ENCODE measurements at regions of chr3 and their contacts with region 1.

Region 1: DNA sequence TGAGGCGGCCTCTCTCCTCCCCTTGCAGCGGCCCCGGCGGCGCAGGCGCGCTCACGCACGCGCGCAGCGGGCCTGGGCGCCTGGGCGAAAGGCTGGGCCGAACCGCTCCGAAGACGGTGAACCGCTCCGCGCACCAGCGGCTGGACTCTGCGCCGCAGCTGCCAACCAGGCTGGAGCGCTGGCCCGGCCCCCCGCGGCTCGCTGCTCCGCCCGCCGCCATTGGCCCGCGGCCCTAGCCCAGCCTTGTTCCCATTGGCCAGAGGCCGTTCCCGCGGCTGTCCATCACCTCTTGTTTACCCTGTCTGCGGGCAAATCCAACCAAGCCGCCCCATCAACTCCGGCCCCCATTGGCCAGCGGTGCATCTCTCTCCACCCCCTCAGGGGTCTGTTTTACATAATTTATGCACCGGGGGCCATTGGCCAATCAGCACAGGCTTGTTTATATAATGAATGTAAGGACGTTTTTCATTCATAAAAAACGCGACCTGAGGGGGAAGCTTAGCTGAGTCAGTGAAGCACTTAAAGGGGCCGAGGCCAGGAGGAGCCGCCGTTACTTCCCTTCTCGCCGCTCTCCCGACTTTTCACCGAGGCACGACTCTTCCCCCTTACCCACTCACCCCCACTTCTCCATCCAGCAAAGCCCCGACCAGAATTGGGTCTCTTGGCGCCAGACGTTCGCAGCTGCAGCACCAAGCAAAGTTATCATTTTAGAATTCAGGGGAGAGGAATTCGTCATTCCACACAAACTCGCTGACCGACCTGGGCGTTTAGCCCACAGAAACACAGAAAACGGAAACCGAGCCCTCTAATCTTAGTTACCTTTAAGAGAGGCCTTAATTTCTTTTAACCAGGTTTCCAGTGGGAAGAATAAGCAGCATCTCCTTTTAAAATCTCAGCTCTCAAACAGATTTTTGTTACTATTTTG is at the start of gene ETV5:
- DNase-seq: peak; percentile 100
- H3K4me3 ChIP-seq: peak within 1 kb of the TSS; percentile 67 to 95 (median 87)
- H3K27ac ChIP-seq: peak within 1 kb of the TSS; percentile 88
- H3K4me1 ChIP-seq: peaks cover 18% of the 10 kb centered on the region
- H3K27me3 ChIP-seq: peaks cover 11 to 13% of the 10 kb centered on the region in 2 experiments
- CTCF ChIP-seq: no peak
- POLR2A ChIP-seq: peak; percentile 77
- total RNA-seq, gene ETV5: 40.9 and 43.4 TPM in 2 replicates

Region 2: DNA sequence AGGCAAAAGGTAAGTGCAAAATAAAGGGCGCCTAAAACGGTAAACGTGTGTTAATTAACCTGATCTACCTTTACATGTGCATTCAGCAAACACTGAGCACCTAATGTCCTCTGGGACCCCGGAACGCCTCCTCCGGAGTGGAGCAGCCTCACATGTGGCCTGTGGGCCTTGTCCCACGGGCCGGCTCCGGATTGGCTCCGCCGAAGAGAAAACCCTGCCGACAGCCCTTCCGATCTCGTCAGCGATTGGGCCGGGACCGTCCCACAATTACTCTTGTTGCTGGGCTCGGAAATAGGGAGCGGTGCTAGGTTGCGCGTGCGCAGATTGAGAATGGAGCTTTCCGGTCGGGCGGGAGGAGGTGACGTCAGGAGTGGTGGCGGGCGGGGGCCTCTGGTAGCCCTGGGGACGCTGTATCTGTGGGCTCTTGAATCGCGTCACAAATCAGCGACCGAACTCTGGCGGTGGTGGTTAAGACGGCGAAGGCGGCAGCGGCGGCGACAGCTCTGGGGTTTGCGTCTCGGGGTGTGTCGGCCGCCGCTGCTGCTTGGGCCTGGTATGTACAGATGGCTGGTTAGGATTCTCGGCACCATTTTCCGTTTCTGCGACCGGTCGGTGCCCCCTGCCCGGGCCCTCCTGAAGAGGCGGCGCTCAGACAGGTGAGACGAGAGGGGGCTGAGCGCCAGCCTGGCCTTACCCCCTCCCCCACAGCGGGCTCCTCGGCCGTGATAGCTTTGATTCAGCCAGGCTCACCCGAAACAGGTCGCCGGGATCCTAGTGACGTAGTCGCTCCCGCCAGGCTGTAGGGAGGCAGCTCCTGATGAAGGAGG is 523.1 kb before region 1 on chr3 and contains the start of gene SENP2:
- CTCF ChIA-PET with region 1: no interaction called
- POLR2A ChIA-PET with region 1: no interaction called
- dilution Hi-C with region 1: no loop called
- intact Hi-C with region 1: loop called (anchors 5 kb)
- DNase-seq: peak; percentile 100
- H3K4me3 ChIP-seq: peak within 1 kb of the TSS; percentile 36 to 93 (median 63)
- H3K27ac ChIP-seq: peak within 1 kb of the TSS; percentile 72
- H3K4me1 ChIP-seq: peaks cover 7% of the 10 kb centered on the region
- H3K27me3 ChIP-seq: peaks cover 0 to under 1% of the 10 kb centered on the region in 2 experiments
- CTCF ChIP-seq: no peak
- POLR2A ChIP-seq: peak; percentile 90
- total RNA-seq, gene SENP2: 38.9 and 40.4 TPM in 2 replicates

Region 3: GRCh38 chr3:185937689-185938463 is 171.3 kb before region 1 on chr3 and contains the start of gene TRA2B:
- CTCF ChIA-PET with region 1: interaction called, 7 read pairs
- POLR2A ChIA-PET with region 1: interaction called, 4 read pairs
- dilution Hi-C with region 1: no loop called
- intact Hi-C with region 1: loop called (anchors 1 kb)
- DNase-seq: peak; percentile 99
- H3K4me3 ChIP-seq: peak within 1 kb of the TSS; percentile 41 to 98 (median 97)
- H3K27ac ChIP-seq: peak within 1 kb of the TSS; percentile 76
- H3K4me1 ChIP-seq: peaks cover 26% of the 10 kb centered on the region
- H3K27me3 ChIP-seq: peaks cover 0 to 3% of the 10 kb centered on the region in 2 experiments
- CTCF ChIP-seq: peak in 1 of 2 donors; percentile 38
- POLR2A ChIP-seq: peak; percentile 99
- total RNA-seq, gene TRA2B: 199 and 214 TPM in 2 replicates

Region 4: GRCh38 chr3:186044973-186045372 is 64.2 kb before region 1 on chr3:
- CTCF ChIA-PET with region 1: interaction called, 5 read pairs
- POLR2A ChIA-PET with region 1: no interaction called
- dilution Hi-C with region 1: no loop called
- intact Hi-C with region 1: loop called (anchors 2 kb)
- DNase-seq: peak; percentile 99
- H3K4me3 ChIP-seq: no peak overlapping the region
- H3K27ac ChIP-seq: peak overlapping the region; percentile 28
- H3K4me1 ChIP-seq: peaks cover 10% of the 10 kb centered on the region
- H3K27me3 ChIP-seq: peaks cover 0 to 4% of the 10 kb centered on the region in 2 experiments
- CTCF ChIP-seq: no peak
- POLR2A ChIP-seq: no peak

Region 5: GRCh38 chr3:186067360-186068242 is 41.6 kb before region 1 on chr3:
- CTCF ChIA-PET with region 1: no interaction called
- POLR2A ChIA-PET with region 1: no interaction called
- dilution Hi-C with region 1: no loop called
- intact Hi-C with region 1: no loop called
- DNase-seq: no peak
- H3K4me3 ChIP-seq: no peak overlapping the region
- H3K27ac ChIP-seq: no peak overlapping the region
- H3K4me1 ChIP-seq: no peaks in the 10 kb centered on the region
- H3K27me3 ChIP-seq: no peaks in the 10 kb centered on the region
- CTCF ChIP-seq: no peak
- POLR2A ChIP-seq: no peak

Region 6: DNA sequence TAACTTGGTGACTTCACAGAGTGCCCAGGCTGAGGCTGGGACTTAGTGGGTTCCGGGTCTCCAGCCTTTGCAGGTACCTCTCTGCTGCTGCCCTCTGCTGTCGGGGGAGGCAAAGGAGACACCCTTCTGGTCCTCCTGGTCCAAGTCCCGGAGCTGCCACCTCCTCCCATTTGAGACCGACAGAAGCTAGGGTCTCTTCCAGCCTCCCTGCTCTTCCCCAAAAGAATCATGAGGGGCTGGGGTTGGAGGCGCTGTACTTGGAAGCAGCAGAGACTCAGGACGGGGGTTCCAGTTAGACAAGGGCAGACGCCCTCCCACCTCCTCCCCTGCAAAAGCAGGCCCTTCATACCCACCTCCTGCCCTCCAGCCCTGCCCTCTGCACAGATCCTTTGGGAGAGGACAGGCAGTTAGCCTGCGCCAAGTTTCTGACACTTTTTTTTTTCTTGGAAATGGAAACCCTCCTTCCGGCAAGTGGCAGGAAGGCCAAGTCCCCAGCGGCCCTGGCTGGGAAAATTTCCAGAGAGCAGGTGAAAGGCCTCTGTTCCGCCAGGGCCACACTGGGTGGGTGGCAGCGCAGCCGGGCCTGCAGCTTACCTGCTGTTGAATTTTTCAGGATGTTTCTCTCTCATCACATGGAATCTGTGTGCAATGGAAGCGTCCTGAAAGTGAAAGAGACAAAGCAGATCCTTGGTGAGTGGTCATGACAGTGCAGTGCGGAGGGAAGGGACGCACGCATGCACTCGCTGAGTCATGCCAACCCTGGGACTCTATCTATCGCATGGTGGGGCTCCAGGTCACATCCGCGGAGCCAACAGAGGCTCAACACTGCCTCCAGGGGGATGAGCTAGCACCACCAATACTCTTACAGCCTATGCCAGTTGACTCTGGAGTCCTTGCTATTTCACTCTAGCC is 133.0 kb after region 1 on chr3:
- CTCF ChIA-PET with region 1: no interaction called
- POLR2A ChIA-PET with region 1: no interaction called
- dilution Hi-C with region 1: no loop called
- intact Hi-C with region 1: loop called (anchors 5 kb)
- DNase-seq: peak; percentile 33
- H3K4me3 ChIP-seq: no peak overlapping the region
- H3K27ac ChIP-seq: no peak overlapping the region
- H3K4me1 ChIP-seq: no peaks in the 10 kb centered on the region
- H3K27me3 ChIP-seq: no peaks in the 10 kb centered on the region
- CTCF ChIP-seq: peak; percentile 24 to 55
- POLR2A ChIP-seq: no peak

Region 7: DNA sequence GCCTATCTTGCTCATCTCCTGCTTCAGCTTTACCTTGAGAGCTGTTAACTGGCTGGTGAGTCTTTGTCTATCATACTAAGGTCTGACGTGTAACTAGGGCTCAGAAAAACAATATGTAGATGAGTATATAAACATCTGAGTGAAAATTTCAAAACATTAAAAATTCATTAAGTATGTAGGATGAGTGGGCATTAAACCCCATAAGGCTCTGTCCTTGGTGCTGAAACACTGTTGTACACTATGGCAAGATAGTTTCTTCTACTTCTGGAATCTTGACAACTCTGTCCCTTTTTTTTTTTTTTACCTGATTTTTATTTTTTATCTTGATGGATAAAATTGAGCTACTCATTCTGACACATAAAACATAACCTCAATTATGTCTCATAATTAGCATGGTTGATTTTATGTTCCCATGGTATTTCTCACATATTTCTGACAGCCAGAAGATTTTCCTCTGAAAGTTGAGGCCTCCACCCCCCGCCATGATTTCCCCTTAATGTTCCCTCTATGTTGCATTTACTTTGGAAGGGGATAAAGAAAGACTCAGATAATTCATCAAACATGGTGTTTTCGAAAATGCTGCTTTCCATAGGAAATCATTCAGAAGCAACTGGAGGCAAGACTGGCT is 198.5 kb after region 1 on chr3:
- CTCF ChIA-PET with region 1: no interaction called
- POLR2A ChIA-PET with region 1: no interaction called
- dilution Hi-C with region 1: no loop called
- intact Hi-C with region 1: no loop called
- DNase-seq: peak; percentile 38
- H3K4me3 ChIP-seq: no peak overlapping the region
- H3K27ac ChIP-seq: no peak overlapping the region
- H3K4me1 ChIP-seq: no peaks in the 10 kb centered on the region
- H3K27me3 ChIP-seq: peaks cover 0 to 3% of the 10 kb centered on the region in 2 experiments
- CTCF ChIP-seq: no peak
- POLR2A ChIP-seq: no peak

Region 8: GRCh38 chr3:186570096-186570940 is 461.1 kb after region 1 on chr3 and contains the start of gene DNAJB11:
- CTCF ChIA-PET with region 1: interaction called, 3 read pairs
- POLR2A ChIA-PET with region 1: interaction called, 9 read pairs
- dilution Hi-C with region 1: no loop called
- intact Hi-C with region 1: loop called (anchors 1 kb)
- DNase-seq: peak; percentile 100
- H3K4me3 ChIP-seq: peak within 1 kb of the TSS; percentile 80 to 91 (median 90)
- H3K27ac ChIP-seq: peak within 1 kb of the TSS; percentile 67
- H3K4me1 ChIP-seq: peaks cover 18% of the 10 kb centered on the region
- H3K27me3 ChIP-seq: no peaks in the 10 kb centered on the region
- CTCF ChIP-seq: no peak
- POLR2A ChIP-seq: peak; percentile 87
- total RNA-seq, gene DNAJB11: 87.6 and 100 TPM in 2 replicates

Region 9: GRCh38 chr3:187082758-187083375 is 973.7 kb after region 1 on chr3:
- CTCF ChIA-PET with region 1: no interaction called
- POLR2A ChIA-PET with region 1: no interaction called
- dilution Hi-C with region 1: no loop called
- intact Hi-C with region 1: loop called (anchors 10 kb)
- DNase-seq: no peak
- H3K4me3 ChIP-seq: no peak overlapping the region
- H3K27ac ChIP-seq: no peak overlapping the region
- H3K4me1 ChIP-seq: peaks cover 14% of the 10 kb centered on the region
- H3K27me3 ChIP-seq: no peaks in the 10 kb centered on the region
- CTCF ChIP-seq: no peak
- POLR2A ChIP-seq: no peak

Measured in endothelial cell of umbilical vein (primary cell).